HEK293 (cell line): ENCODE measurements at regions of chr16 and their contacts with region 1.

Region 1: DNA sequence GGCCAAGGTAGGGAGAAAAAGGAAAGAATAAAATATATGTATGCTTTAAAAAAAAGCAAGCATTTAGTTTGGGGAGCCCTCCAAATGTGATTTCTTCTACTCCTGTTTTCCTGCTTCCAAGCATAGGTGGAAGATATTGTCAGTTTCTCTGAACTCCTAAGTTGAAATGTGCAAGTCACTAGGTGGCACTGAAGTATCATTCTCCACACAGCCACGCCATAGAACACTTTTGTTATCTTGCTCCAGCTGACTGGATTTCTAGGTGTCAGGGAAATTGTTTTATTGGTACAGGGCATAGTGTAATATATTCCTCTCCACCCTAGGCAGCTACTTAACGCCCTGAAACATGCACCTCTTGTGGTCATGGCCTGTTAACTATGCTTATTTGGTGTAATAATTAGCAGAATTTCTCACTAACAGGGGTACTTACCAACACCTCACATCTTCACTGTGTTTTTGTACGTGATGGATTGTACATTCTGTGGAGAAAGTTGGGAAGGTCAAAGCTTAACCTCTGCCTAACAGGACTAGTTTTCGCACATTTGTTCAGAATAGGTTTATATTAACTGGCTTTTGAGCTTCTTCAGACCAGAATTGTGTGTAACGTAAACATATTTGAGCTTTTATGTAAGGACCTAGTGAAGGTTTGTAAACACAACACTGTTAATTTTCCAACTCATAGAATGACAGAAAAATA is 69.3 kb downstream of the FTO start:
- H3K4me3 ChIP-seq: no peak overlapping the region
- H3K27ac ChIP-seq: no peak overlapping the region
- H3K4me1 ChIP-seq: peaks cover 21% of the 10 kb centered on the region
- CTCF ChIP-seq: peak; percentile 91

Region 2: DNA sequence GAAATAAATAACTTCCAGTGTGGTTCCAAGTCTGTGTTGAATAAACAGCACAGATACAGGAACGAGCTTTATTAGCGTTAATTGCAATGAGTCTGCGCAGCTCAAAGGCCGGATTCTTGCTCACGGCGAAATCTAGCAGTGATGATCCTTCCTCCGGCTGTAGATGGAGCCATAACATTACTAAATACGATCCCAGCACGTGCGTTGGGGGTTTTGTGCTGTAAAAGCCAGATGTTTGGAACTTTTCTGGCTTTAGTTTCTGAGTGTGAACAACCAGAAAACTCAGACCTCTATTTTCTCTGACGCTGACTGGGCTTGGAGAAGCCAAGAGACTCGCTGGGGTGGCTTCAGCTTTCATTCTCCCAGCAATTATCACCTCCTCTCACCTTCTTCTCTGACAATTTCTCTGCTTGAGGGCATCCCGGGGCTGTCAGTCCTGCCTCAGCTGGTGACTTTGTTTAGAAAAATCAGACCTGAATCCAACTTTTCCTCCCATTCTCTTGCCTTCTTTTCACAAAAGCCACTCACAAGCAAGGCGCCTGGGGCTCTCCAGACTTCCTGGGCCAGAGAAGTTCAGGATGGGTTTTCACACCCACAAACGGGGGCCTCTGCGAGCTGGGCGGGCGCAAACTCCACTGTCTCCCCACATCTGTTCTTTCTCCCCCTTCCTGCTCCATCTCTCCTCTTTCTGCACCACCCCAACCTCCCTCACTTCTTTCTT is 223.2 kb before region 1 on chr16:
- CTCF ChIA-PET with region 1: interaction called, 11 read pairs
- POLR2A ChIA-PET with region 1: no interaction called
- H3K4me3 ChIP-seq: no peak overlapping the region
- H3K27ac ChIP-seq: no peak overlapping the region
- H3K4me1 ChIP-seq: no peaks in the 10 kb centered on the region
- CTCF ChIP-seq: peak; percentile 83

Region 3: DNA sequence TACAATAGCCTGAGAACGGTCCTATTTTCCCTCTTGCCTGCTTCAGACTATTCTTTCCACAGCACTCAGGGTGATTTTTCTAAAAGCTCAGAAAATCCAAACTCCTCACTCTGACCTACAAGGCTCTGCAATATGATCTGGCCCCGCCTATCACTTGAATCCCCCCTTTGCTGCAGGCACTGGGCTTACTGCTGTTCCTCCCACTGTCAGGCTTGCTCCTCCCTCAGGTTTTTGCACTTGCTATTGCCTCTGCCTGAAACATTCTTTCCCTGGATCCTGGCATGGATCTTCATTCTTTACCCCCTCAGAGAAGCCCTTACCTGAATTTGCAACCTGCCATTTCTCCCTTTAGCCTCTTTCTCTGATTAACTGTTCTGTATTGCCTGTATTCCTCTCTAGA is 121.9 kb before region 1 on chr16:
- CTCF ChIA-PET with region 1: no interaction called
- POLR2A ChIA-PET with region 1: no interaction called
- H3K4me3 ChIP-seq: no peak overlapping the region
- H3K27ac ChIP-seq: no peak overlapping the region
- H3K4me1 ChIP-seq: no peaks in the 10 kb centered on the region
- CTCF ChIP-seq: no peak

Region 4: GRCh38 chr16:53892155-53892554 is 118.9 kb after region 1 on chr16:
- CTCF ChIA-PET with region 1: interaction called, 10 read pairs
- POLR2A ChIA-PET with region 1: no interaction called
- H3K4me3 ChIP-seq: no peak overlapping the region
- H3K27ac ChIP-seq: no peak overlapping the region
- H3K4me1 ChIP-seq: peaks cover 20% of the 10 kb centered on the region
- CTCF ChIP-seq: peak; percentile 55; the same call in 1 of the 2 replicates

Region 5: GRCh38 chr16:54080524-54081008 is 307.3 kb after region 1 on chr16:
- CTCF ChIA-PET with region 1: no interaction called
- POLR2A ChIA-PET with region 1: no interaction called
- H3K4me3 ChIP-seq: no peak overlapping the region
- H3K27ac ChIP-seq: no peak overlapping the region
- H3K4me1 ChIP-seq: peaks cover 5% of the 10 kb centered on the region; the same call in 1 of the 2 replicates
- CTCF ChIP-seq: no peak